ENCODE measurements at regions of chr14 and their contacts with region 1.

Region 1: DNA sequence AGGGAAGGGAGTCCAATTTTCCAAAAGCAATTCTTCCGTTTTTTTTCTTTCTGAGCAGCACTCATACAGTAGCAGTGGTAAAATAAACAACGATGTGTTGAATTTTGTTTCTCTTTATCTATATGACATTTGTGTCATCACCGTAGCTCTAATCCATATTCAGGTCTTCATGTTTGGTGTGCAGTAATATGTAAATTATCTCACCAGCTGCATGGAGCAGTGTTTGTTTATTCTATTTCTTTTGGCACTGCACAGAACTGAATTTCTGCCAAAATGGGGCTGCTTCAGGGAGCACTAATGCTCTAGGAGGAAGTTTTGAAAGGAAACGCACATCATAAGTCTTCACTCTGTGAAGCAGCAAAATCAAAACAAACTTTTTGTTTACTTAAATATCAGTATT is 130.0 kb upstream of the NPAS3 start:
- DNase-seq: peak; percentile 78
- H3K4me3 ChIP-seq: peak overlapping the region; percentile 1
- CTCF ChIP-seq: no peak

Region 2: GRCh38 chr14:32724867-32725471 is 83.7 kb before region 1 on chr14:
- in situ Hi-C with region 1: loop called (anchors 5 kb)
- DNase-seq: peak; percentile 96
- H3K4me3 ChIP-seq: peak overlapping the region; percentile 23
- CTCF ChIP-seq: no peak

Region 3: GRCh38 chr14:32738206-32738871 is 70.3 kb before region 1 on chr14:
- in situ Hi-C with region 1: no loop called
- DNase-seq: no peak
- H3K4me3 ChIP-seq: no peak overlapping the region
- CTCF ChIP-seq: no peak